ENCODE measurements at regions of chr19 and their contacts with region 1.

Region 1: DNA sequence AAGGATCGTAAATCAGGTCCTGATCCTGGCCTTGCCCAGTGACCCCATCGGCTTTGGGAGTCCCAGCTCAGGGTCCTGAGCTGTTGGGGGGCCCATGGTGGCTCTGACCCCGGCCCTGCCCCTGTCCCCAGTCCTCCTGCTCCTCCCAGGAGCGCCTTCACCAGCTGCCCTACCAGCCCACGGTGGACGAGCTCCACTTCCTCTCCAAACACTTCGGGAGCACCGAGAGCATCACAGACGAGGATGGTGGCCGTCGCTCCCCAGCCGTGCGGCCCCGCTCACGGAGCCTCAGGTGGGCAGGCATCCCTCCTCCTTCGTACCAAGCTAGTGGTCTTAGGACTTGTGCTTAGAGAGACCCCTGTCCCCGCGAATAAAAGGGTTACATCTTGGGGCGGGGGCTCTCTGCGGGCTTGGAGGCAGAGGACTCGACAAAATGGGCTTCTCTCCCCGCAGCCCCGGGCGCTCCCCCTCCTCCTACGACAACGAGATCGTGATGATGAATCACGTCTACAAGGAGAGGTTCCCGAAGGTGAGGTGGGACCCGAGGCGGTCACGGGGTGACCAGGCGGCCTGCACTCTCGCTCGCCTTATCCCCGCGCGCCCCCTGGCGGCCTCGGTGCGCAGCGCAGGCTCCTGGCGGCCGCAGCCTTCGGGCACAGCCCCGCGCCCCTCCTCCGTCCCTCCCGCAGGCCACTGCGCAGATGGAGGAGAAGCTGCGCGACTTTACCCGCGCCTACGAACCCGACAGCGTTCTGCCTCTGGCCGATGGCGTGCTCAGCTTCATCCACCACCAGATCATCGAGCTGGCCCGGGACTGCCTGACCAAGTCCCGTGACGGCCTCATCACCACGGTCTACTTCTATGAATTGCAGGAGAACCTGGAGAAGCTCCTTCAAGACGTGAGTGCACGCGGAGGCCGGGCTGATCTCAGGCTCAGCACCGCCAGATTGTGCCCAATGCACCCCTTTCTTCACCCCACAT is 9.1 kb downstream of the MAST1 start:
- DNase-seq: peak; percentile 92
- H3K4me3 ChIP-seq: peak overlapping the region in 2 of 4 donors; percentile 11 to 32
- H3K27ac ChIP-seq: peak overlapping the region in 1 of 4 donors; percentile 43
- H3K4me1 ChIP-seq: peaks cover 0 to 12% (median 7%) of the 10 kb centered on the region in 4 donors
- H3K27me3 ChIP-seq: peaks cover 6 to 35% (median 15%) of the 10 kb centered on the region in 3 donors
- CTCF ChIP-seq: peak; percentile 94 to 99 (median 97)
- EP300 ChIP-seq: peak in 1 of 4 donors; percentile 78
- POLR2A ChIP-seq: no peak

Region 2: GRCh38 chr19:12766051-12766521 is 81.4 kb before region 1 on chr19:
- intact Hi-C with region 1: loop called (anchors 1 kb)
- DNase-seq: peak; percentile 93
- H3K4me3 ChIP-seq: peak overlapping the region; percentile 25 to 54 (median 38)
- H3K27ac ChIP-seq: peak overlapping the region; percentile 55 to 80 (median 70)
- H3K4me1 ChIP-seq: peaks cover 0 to 10% (median 0%) of the 10 kb centered on the region in 4 donors
- H3K27me3 ChIP-seq: no peaks in the 10 kb centered on the region
- CTCF ChIP-seq: peak; percentile 58 to 95 (median 70)
- EP300 ChIP-seq: no peak
- POLR2A ChIP-seq: no peak

Region 3: GRCh38 chr19:12806239-12807081 is 41.0 kb before region 1 on chr19 and contains the start of gene RNASEH2A:
- intact Hi-C with region 1: loop called (anchors 2 kb)
- DNase-seq: peak; percentile 94
- H3K4me3 ChIP-seq: peak within 1 kb of the TSS; percentile 30 to 62 (median 50)
- H3K27ac ChIP-seq: peak within 1 kb of the TSS; percentile 57 to 75 (median 74)
- H3K4me1 ChIP-seq: peaks cover 0 to 24% (median 17%) of the 10 kb centered on the region in 4 donors
- H3K27me3 ChIP-seq: no peaks in the 10 kb centered on the region
- CTCF ChIP-seq: peak in 2 of 4 experiments; percentile 22 to 29
- EP300 ChIP-seq: no peak
- POLR2A ChIP-seq: no peak
- total RNA-seq, gene RNASEH2A: 1.9 to 3.7 (median 3.0) TPM

Measured in sigmoid colon (tissue), 7 donors.